ENCODE measurements at regions of chr11 and their contacts with region 1.

Region 1: DNA sequence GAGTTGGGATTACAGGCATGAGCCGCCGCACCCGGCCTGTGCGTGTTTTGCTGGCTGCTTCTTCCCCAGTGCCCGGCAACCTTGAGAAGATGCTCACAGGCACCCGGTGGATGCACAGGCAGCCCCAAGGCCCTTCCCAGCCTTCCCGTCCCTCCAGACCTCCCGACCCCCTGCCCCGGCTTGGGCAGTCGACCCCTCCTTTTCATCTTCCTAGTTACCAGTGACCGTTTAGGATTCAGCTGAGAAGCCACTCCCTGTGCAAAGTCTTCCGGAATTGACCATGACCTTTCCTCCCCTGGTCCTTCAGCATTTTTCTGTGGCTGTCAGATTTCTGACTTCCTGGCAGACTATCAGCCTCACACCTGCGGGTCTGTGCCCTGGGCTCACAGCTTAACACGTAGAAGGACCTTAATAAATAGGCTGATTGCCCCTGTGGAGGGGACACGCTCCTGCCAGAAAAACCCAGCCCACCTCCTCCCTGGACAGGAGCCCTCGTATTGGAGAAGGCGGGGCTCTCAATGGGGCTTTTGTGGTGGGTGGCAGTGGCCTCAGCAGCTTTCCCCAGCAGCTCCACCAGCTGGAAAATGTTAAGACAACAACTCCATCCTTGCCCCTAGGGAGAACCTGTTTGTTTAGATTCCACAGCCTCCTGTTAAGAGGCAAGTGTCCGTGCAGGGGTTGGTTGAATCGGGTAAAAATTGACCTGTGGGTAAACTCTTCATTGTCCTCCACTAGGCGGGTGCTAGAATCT is 10.4 kb upstream of the ANO1 start:
- DNase-seq: peak; percentile 48
- ATAC-seq: peak; percentile 73
- H3K4me3 ChIP-seq: peak overlapping the region in 1 of 2 experiments; percentile 19; a peak in 1 of 4 replicates
- H3K27ac ChIP-seq: peak overlapping the region; percentile 44
- H3K4me1 ChIP-seq: peaks cover 41 to 50% of the 10 kb centered on the region in 2 experiments
- H3K27me3 ChIP-seq: no peaks in the 10 kb centered on the region
- CTCF ChIP-seq: peak; percentile 4 to 32 (median 14); a peak in 1 of 6 replicates
- POLR2A ChIP-seq: no peak
- RAD21 ChIP-seq: peak; percentile 59

Region 2: GRCh38 chr11:69949327-69949726 is 118.4 kb before region 1 on chr11:
- CTCF ChIA-PET with region 1: no interaction called
- POLR2A ChIA-PET with region 1: no interaction called
- RAD21 ChIA-PET with region 1: no interaction called
- intact Hi-C with region 1: loop called (anchors 5 kb)
- DNase-seq: peak; percentile 97
- ATAC-seq: peak; percentile 75
- H3K4me3 ChIP-seq: peak overlapping the region; percentile 13 to 41; a peak in 3 of 4 replicates
- H3K27ac ChIP-seq: peak overlapping the region; percentile 97
- H3K4me1 ChIP-seq: peaks cover 41 to 56% of the 10 kb centered on the region in 2 experiments
- H3K27me3 ChIP-seq: no peaks in the 10 kb centered on the region
- CTCF ChIP-seq: no peak
- POLR2A ChIP-seq: no peak
- RAD21 ChIP-seq: no peak

Measured in HCT116 (cell line).